Right ventricle myocardium superior (tissue), 1 donor: ENCODE measurements at regions of chr2 and their contacts with region 1.

Region 1: GRCh38 chr2:157182834-157183396 is 74.6 kb upstream of the GALNT5 start:
- DNase-seq: no peak
- ATAC-seq: peak; percentile 31

Region 2: DNA sequence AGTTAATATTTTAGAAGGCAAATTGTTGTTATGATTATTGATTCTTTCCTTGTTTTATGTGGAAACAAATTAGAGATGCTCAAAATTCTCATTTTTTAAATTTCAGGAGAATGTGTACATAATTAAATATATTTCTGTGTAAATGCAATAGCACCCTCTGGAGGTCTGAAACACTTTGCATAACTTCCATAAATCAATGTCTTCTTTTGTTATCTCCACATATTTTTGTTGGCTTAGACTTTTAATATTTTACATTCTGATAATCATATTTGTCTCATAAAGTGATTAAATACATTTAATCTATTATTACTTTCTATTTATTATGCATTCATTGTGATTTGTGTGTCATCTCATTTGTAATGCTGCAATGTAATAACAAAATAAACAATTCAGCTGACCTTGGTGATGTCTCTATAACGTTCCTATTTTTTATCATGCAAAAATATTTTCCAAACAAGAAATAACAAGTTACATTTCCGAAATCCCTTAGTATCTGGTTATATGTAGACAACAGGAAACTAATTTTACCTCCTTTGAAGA is 127.2 kb before region 1 on chr2:
- intact Hi-C with region 1: loop called (anchors 10 kb)
- DNase-seq: no peak
- ATAC-seq: no peak